Calu3 (cell line): ENCODE measurements at regions of chr7 and their contacts with region 1.

Region 1: GRCh38 chr7:17986851-17987250 is 40.8 kb downstream of the PRPS1L1 start:
- DNase-seq: no peak
- H3K4me3 Mint-ChIP-seq: peak overlapping the region; percentile 2
- H3K27ac Mint-ChIP-seq: peak overlapping the region; percentile 41
- H3K4me1 Mint-ChIP-seq: peaks cover 57% of the 10 kb centered on the region
- H3K27me3 Mint-ChIP-seq: no peaks in the 10 kb centered on the region
- CTCF ChIP-seq: no peak

Region 2: DNA sequence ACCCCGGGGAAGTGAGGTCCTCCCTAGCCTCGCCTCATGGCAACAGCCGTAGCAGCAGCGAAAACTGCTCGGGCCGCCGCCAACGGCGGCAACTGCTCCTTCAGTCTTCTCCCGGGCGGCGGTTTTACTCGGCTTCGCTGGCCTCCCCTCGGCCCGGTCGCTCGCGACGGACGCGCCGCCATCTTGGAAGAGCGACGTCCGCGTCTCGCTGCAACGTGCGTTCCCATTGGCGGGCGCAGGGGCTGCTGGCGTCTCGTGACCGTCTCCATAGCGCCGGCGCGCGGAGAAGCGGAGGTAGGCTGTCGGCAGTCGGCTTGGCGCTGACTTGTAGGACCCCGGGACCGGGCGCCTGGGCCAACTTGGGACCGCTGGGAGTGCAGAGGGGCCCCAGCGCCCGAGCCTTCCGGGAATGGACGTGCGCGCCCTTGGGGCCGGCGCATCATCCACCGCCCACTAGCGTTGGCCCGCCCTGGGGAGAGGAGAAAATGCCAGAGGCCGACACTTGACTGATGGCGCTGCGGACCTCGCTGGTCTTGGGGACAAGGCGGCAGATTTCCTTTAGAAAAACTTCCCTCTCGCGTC is 46.5 kb before region 1 on chr7 and contains the start of gene SNX13:
- CTCF ChIA-PET with region 1: no interaction called
- intact Hi-C with region 1: no loop called
- DNase-seq: peak; percentile 97
- H3K4me3 Mint-ChIP-seq: peak within 1 kb of the TSS; percentile 95
- H3K27ac Mint-ChIP-seq: peak within 1 kb of the TSS; percentile 94
- H3K4me1 Mint-ChIP-seq: peaks cover 33% of the 10 kb centered on the region
- H3K27me3 Mint-ChIP-seq: no peaks in the 10 kb centered on the region
- CTCF ChIP-seq: peak; percentile 37
- total RNA-seq, gene SNX13: 69.3 and 71.9 TPM in 2 replicates

Region 3: DNA sequence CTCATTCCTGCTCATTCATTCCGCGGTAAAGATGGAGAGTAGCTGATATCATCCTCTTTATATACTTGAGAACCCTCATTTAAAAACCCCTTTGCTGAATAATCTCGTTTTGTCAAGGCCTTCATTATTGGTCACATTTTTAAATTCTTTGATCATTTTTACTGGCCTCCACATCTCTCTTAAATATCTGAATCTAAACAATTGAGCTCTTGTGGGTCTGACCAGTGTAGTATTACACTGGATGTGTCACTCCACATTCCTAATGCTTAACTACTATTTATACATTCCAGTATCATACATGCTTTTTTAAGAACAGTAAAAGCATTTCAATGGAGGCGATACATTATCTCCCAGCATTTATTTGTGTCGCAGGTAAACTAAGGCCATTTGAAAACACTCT is 53.3 kb after region 1 on chr7:
- CTCF ChIA-PET with region 1: no interaction called
- intact Hi-C with region 1: loop called (anchors 5 kb)
- DNase-seq: peak; percentile 27
- H3K4me3 Mint-ChIP-seq: peak overlapping the region; percentile 3
- H3K27ac Mint-ChIP-seq: peak overlapping the region; percentile 2
- H3K4me1 Mint-ChIP-seq: peaks cover 30% of the 10 kb centered on the region
- H3K27me3 Mint-ChIP-seq: no peaks in the 10 kb centered on the region
- CTCF ChIP-seq: no peak